SK-N-SH (cell line): ENCODE measurements at regions of chr14 and their contacts with region 1.

Region 1: GRCh38 chr14:36070031-36070719 is 106.3 kb downstream of the PTCSC3 start:
- DNase-seq: peak; percentile 39
- H3K4me3 ChIP-seq: peak overlapping the region in 1 of 2 experiments; percentile 32; a peak in 1 of 4 replicates
- H3K27ac ChIP-seq: no peak overlapping the region
- H3K4me1 ChIP-seq: no peaks in the 10 kb centered on the region; a peak in 1 of 4 replicates
- H3K27me3 ChIP-seq: peaks cover 45% of the 10 kb centered on the region; the same call in 1 of the 2 replicates
- CTCF ChIP-seq: peak; percentile 85
- EP300 ChIP-seq: no peak
- RAD21 ChIP-seq: peak; percentile 73

Region 2: DNA sequence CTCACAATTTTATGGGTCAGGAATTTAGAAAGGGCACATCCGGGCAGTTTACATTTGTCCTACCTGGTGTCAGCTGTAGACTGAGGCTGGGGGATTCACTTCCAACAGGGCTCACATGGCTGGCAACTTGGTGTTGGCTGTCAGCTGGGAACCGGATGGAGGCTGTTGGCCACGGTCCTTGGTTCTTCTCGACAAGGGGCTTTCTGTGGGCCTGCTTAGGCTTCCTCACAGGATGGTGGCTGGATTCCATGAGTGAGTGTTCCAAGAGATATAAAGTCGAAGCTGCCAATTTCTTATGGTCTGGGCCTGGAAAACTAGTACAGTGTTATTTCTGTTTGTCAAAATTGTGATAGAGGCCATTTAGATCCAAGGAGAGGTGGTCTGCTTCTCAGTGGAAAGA is 21.5 kb before region 1 on chr14:
- CTCF ChIA-PET with region 1: interaction called, 38 read pairs
- POLR2A ChIA-PET with region 1: no interaction called
- DNase-seq: no peak
- H3K4me3 ChIP-seq: no peak overlapping the region
- H3K27ac ChIP-seq: no peak overlapping the region
- H3K4me1 ChIP-seq: no peaks in the 10 kb centered on the region
- H3K27me3 ChIP-seq: peaks cover 4% of the 10 kb centered on the region; the same call in 1 of the 2 replicates
- CTCF ChIP-seq: no peak
- EP300 ChIP-seq: no peak
- RAD21 ChIP-seq: no peak

Region 3: DNA sequence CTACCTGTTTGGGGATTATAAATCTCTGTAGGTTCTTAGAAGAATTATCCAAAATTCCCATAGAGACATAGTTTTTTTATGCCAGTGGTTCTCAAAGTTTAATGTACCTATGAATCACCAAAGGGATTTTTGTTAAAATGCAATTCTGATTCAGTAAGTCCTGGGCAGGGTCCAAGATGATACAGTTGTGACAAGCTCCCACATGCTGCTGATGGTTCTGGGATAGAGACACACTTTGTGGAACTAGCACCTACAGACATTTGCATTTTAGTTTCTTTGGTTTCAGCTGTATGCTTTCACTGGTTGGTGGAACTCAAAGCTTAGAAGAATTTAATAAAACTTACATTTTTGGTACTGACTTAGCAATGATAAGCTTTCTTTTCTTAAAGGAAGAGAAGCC is 25.9 kb after region 1 on chr14:
- CTCF ChIA-PET with region 1: interaction called, 17 read pairs
- POLR2A ChIA-PET with region 1: no interaction called
- DNase-seq: no peak
- H3K4me3 ChIP-seq: no peak overlapping the region
- H3K27ac ChIP-seq: no peak overlapping the region
- H3K4me1 ChIP-seq: no peaks in the 10 kb centered on the region
- H3K27me3 ChIP-seq: peaks cover 21% of the 10 kb centered on the region
- CTCF ChIP-seq: no peak
- EP300 ChIP-seq: no peak
- RAD21 ChIP-seq: no peak

Region 4: GRCh38 chr14:36367985-36368774 is 298.0 kb after region 1 on chr14:
- CTCF ChIA-PET with region 1: interaction called, 38 read pairs
- POLR2A ChIA-PET with region 1: no interaction called
- DNase-seq: no peak
- H3K4me3 ChIP-seq: no peak overlapping the region
- H3K27ac ChIP-seq: no peak overlapping the region
- H3K4me1 ChIP-seq: no peaks in the 10 kb centered on the region
- H3K27me3 ChIP-seq: no peaks in the 10 kb centered on the region; the same call in 1 of the 2 replicates
- CTCF ChIP-seq: no peak
- EP300 ChIP-seq: no peak
- RAD21 ChIP-seq: no peak